ENCODE measurements at regions of chr11 and their contacts with region 1.

Region 1: GRCh38 chr11:118792570-118793124 is 1.7 kb upstream of the DDX6 start:
- DNase-seq: peak; percentile 85

Region 2: DNA sequence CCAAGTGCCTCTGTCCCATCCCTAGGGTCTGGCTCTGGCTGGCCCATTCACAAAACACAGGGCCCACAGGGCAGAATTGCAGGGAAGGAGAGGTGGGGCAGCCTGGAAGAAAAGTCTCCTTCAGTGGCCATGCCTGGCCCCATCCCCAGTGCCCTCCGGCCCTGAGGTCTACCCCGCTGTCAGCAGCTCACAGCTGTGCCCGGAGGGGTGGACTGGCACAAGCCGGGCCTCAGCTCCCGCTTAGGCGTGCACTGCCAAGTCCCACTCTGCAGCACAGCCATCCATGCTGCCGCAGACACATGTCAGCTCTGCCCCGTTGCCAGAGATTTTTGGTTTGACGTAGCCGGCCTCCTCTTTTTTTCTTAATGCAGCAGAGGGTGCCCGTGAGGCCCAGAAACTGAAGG is 612.3 kb before region 1 on chr11:
- CTCF ChIA-PET with region 1: no interaction called
- POLR2A ChIA-PET with region 1: no interaction called
- DNase-seq: peak; percentile 71

Region 3: DNA sequence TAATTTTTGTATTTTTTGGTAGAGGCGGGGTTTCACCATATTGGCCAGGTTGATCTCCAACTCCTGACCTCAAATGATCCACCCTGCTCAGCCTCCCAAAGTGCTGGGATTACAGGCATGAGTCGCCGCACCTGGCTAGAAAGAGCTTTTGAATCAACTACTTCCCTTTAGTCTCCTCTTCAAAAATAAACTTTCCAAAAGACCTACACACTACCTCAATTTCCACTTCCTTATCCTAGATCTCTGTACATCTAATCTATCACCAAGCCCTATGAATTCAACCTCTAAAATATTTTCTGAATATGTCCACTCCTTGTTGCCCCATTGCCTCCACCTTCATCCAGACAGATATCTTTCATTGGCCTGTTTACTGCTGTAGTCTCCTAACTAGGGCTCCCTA is 11.4 kb after region 1 on chr11:
- CTCF ChIA-PET with region 1: no interaction called
- POLR2A ChIA-PET with region 1: interaction called, 16 read pairs
- DNase-seq: no peak

Measured in HEK293T (cell line).